Caco-2 (cell line): ENCODE measurements at regions of chr11 and their contacts with region 1.

Region 1: GRCh38 chr11:59810189-59810910 is at the start of gene MRPL16:
- DNase-seq: peak; percentile 95 to 97
- H3K4me3 ChIP-seq: peak within 1 kb of the TSS; percentile 83
- H3K4me3 Mint-ChIP-seq: peak within 1 kb of the TSS; percentile 96
- H3K27ac Mint-ChIP-seq: peak within 1 kb of the TSS; percentile 97
- H3K4me1 ChIP-seq: peaks cover 27% of the 10 kb centered on the region
- H3K4me1 Mint-ChIP-seq: peaks cover 37% of the 10 kb centered on the region
- H3K27me3 ChIP-seq: no peaks in the 10 kb centered on the region
- H3K27me3 Mint-ChIP-seq: no peaks in the 10 kb centered on the region
- CTCF ChIP-seq: peak; percentile 38 to 72
- total RNA-seq, gene MRPL16: 61.6 and 66.0 TPM in 2 replicates

Region 2: GRCh38 chr11:59550368-59550841 is 259.9 kb before region 1 on chr11:
- CTCF ChIA-PET with region 1: no interaction called
- POLR2A ChIA-PET with region 1: interaction called, 4 read pairs
- intact Hi-C with region 1: loop called (anchors 5 kb)
- DNase-seq: peak; percentile 96 to 97
- H3K4me3 ChIP-seq: peak overlapping the region; percentile 58
- H3K4me3 Mint-ChIP-seq: peak overlapping the region; percentile 80
- H3K27ac Mint-ChIP-seq: peak overlapping the region; percentile 100
- H3K4me1 ChIP-seq: peaks cover 28% of the 10 kb centered on the region
- H3K4me1 Mint-ChIP-seq: peaks cover 32% of the 10 kb centered on the region
- H3K27me3 ChIP-seq: no peaks in the 10 kb centered on the region
- H3K27me3 Mint-ChIP-seq: peaks cover 7% of the 10 kb centered on the region
- CTCF ChIP-seq: peak; percentile 28 to 63

Region 3: GRCh38 chr11:60130496-60130895 is 320.1 kb after region 1 on chr11:
- CTCF ChIA-PET with region 1: no interaction called
- POLR2A ChIA-PET with region 1: no interaction called
- intact Hi-C with region 1: loop called (anchors 2 kb)
- DNase-seq: peak; percentile 65 to 68
- H3K4me3 ChIP-seq: no peak overlapping the region
- H3K4me3 Mint-ChIP-seq: no peak overlapping the region
- H3K27ac Mint-ChIP-seq: no peak overlapping the region
- H3K4me1 ChIP-seq: peaks cover 6% of the 10 kb centered on the region; the same call in 1 of the 2 replicates
- H3K4me1 Mint-ChIP-seq: peaks cover 4% of the 10 kb centered on the region
- H3K27me3 ChIP-seq: no peaks in the 10 kb centered on the region
- H3K27me3 Mint-ChIP-seq: no peaks in the 10 kb centered on the region
- CTCF ChIP-seq: peak; percentile 47 to 77